Activated B cell treated with CpG ODN at 0.5 μM for 24 hours (primary cell): ENCODE measurements at regions of chr5 and their contacts with region 1.

Region 1: DNA sequence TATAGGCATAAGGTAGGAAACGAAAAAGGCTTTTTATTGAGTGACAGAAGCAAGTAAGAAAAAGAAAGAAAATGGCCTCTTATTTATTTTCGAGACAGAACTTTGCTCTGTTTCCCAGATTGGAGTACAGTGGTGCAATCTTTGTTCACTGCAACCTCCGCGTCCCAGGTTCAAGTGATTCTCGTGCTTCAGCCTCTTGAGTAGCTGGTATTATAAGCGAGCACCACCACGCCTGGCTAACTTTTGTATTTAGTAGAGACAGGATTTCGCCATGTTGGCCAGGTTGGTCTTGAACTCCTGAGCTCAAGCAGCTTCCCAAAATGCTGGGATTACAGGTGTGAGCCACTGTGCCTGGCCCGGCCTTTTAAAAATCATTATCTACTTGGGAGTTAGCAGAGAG is 70.7 kb downstream of the NSD1 start:
- DNase-seq: no peak
- ATAC-seq: no peak
- H3K4me3 Mint-ChIP-seq: no peak overlapping the region
- H3K27ac Mint-ChIP-seq: no peak overlapping the region
- H3K4me1 Mint-ChIP-seq: peaks cover 5% of the 10 kb centered on the region
- H3K27me3 Mint-ChIP-seq: no peaks in the 10 kb centered on the region
- CTCF ChIP-seq: no peak

Region 2: DNA sequence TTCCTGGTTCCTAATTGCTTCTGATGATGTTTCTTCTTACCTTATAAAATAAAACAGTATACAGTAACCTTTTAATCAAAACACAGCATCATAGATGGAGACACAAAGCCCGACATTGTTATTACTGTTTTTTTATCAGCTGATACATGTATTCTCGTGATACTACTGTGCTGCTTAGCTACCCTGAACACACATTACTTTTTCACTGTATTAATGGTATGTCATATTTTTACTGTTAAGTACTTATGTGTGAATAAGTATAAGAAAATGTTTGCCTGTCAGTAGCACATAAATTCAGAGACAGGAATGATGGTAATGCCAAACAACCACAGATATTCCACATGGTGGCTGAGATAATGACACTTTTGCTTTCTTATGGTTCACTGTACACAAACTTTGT is 30.6 kb after region 1 on chr5:
- CTCF ChIA-PET with region 1: no interaction called
- POLR2A ChIA-PET with region 1: no interaction called
- intact Hi-C with region 1: loop called (anchors 5 kb)
- DNase-seq: no peak
- ATAC-seq: no peak
- H3K4me3 Mint-ChIP-seq: no peak overlapping the region
- H3K27ac Mint-ChIP-seq: no peak overlapping the region
- H3K4me1 Mint-ChIP-seq: peaks cover 6% of the 10 kb centered on the region
- H3K27me3 Mint-ChIP-seq: no peaks in the 10 kb centered on the region
- CTCF ChIP-seq: no peak